ENCODE measurements at regions of chr15 and their contacts with region 1.

Region 1: DNA sequence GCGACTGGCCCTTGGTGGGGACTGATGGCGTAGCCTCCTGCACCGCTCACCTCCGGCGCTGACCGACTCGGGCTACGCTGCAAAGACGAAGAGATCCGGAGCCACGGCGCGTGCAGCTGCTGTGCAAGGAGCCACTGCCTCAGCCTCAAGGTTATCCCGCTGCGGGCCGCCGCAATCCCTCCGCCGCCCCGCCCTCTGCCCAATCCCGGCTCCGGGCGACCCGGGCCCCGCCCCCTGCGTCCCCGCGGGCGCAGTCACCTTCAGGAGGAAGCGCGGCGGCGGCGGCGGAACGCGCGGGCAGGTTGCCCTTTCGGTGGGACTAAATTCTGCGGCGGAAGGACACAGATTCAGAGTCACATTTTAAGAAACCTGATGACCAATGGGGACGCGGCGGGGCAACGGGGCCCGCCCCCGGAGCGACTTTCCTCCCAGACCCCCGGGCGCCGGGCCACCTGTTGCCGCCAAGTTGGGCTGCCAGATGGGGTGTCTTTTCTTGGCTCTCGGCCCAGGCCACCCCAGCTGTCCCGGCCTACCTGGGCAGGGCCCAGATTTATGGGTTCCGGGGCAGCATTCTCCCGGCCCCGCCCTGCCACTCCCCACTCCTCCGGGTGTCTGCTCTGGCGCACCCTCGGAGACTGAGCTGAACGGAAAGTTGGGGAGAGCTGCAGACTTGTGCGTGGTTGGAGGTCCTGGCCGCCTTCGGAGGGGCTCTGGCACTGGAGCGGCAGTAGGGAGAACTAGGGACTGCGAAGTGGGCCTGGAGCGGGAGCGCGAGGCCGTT is at the start of gene PKM:
- DNase-seq: peak; percentile 88
- H3K4me3 ChIP-seq: peak within 1 kb of the TSS; percentile 56 to 78 (median 70)
- H3K27ac ChIP-seq: peak within 1 kb of the TSS; percentile 84
- H3K4me1 ChIP-seq: peaks cover 40% of the 10 kb centered on the region
- H3K27me3 ChIP-seq: no peaks in the 10 kb centered on the region
- CTCF ChIP-seq: no peak
- POLR2A ChIP-seq: peak; percentile 99
- total RNA-seq, gene PKM: 932 and 968 TPM in 2 replicates

Region 2: GRCh38 chr15:71899674-71900073 is 331.6 kb before region 1 on chr15:
- CTCF ChIA-PET with region 1: no interaction called
- POLR2A ChIA-PET with region 1: no interaction called
- dilution Hi-C with region 1: no loop called
- intact Hi-C with region 1: no loop called
- DNase-seq: no peak
- H3K4me3 ChIP-seq: no peak overlapping the region
- H3K27ac ChIP-seq: no peak overlapping the region
- H3K4me1 ChIP-seq: no peaks in the 10 kb centered on the region
- H3K27me3 ChIP-seq: no peaks in the 10 kb centered on the region
- CTCF ChIP-seq: no peak
- POLR2A ChIP-seq: no peak

Region 3: DNA sequence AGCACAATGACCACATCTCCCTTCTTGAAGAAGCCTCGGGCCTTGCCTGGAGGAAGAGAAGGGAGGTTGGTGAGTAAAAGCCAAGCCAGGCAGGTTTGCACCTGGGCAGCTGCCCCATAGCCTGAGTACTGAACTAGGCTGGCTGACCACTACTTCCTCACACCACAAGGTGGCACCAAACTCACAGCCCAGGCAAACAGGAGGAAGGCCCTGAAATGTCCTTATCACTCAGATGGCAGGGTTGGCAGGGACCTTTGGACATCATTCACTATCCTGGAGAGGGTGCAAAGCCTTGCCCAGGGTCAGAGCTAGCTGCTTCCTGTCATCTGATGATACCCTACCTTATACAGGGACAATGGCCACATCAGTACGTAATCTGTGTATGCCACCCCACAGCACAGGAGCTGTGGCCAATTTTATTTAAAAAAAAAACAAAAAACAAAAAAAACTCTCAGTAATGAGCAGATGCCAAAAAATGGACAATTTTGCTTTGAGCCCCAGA is 31.5 kb before region 1 on chr15:
- CTCF ChIA-PET with region 1: interaction called, 47 read pairs
- POLR2A ChIA-PET with region 1: no interaction called
- dilution Hi-C with region 1: no loop called
- intact Hi-C with region 1: loop called (anchors 1 kb)
- DNase-seq: peak; percentile 73
- H3K4me3 ChIP-seq: no peak overlapping the region
- H3K27ac ChIP-seq: no peak overlapping the region
- H3K4me1 ChIP-seq: peaks cover 8% of the 10 kb centered on the region
- H3K27me3 ChIP-seq: peaks cover 0 to 2% of the 10 kb centered on the region in 2 experiments
- CTCF ChIP-seq: peak; percentile 86 to 92
- POLR2A ChIP-seq: no peak

Region 4: DNA sequence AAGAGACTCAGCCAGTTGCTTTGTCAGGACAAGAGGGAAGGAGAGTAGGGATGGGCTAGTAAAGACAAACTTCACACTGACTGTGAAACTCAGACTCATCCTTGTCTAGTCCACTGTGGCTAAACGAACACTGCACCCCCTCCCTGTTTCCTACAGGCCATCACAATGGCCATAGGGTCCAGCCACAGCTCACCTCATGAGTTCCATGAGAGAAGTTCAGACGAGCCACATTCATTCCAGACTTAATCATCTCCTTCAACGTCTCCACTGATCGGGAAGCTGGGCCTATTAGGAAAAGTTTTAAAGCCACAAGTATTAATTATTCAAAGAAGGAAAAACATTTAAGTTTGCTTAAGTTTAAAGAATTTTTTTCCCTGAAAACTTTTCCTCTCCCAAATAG is 14.0 kb before region 1 on chr15:
- CTCF ChIA-PET with region 1: interaction called, 14 read pairs
- POLR2A ChIA-PET with region 1: interaction called, 4 read pairs
- dilution Hi-C with region 1: no loop called
- intact Hi-C with region 1: no loop called
- DNase-seq: no peak
- H3K4me3 ChIP-seq: no peak overlapping the region
- H3K27ac ChIP-seq: no peak overlapping the region
- H3K4me1 ChIP-seq: no peaks in the 10 kb centered on the region
- H3K27me3 ChIP-seq: no peaks in the 10 kb centered on the region
- CTCF ChIP-seq: no peak
- POLR2A ChIP-seq: no peak

Region 5: GRCh38 chr15:72272213-72273002 is 41.2 kb after region 1 on chr15 and contains the start of gene PARP6:
- CTCF ChIA-PET with region 1: interaction called, 6 read pairs
- POLR2A ChIA-PET with region 1: interaction called, 5 read pairs
- dilution Hi-C with region 1: no loop called
- intact Hi-C with region 1: loop called (anchors 1 kb)
- DNase-seq: peak; percentile 99
- H3K4me3 ChIP-seq: peak within 1 kb of the TSS; percentile 45 to 97 (median 66)
- H3K27ac ChIP-seq: peak within 1 kb of the TSS; percentile 57
- H3K4me1 ChIP-seq: peaks cover 12% of the 10 kb centered on the region
- H3K27me3 ChIP-seq: no peaks in the 10 kb centered on the region
- CTCF ChIP-seq: peak; percentile 31 to 74
- POLR2A ChIP-seq: peak; percentile 58
- total RNA-seq, gene PARP6: 37.4 and 41.1 TPM in 2 replicates

Region 6: GRCh38 chr15:72285927-72286516 is 54.8 kb after region 1 on chr15:
- CTCF ChIA-PET with region 1: interaction called, 3 read pairs
- POLR2A ChIA-PET with region 1: no interaction called
- dilution Hi-C with region 1: no loop called
- intact Hi-C with region 1: loop called (anchors 1 kb)
- DNase-seq: peak; percentile 40
- H3K4me3 ChIP-seq: no peak overlapping the region
- H3K27ac ChIP-seq: no peak overlapping the region
- H3K4me1 ChIP-seq: no peaks in the 10 kb centered on the region
- H3K27me3 ChIP-seq: peaks cover 1% of the 10 kb centered on the region in 2 experiments
- CTCF ChIP-seq: peak; percentile 65 to 77
- POLR2A ChIP-seq: no peak

Region 7: GRCh38 chr15:72473614-72474465 is 242.6 kb after region 1 on chr15 and contains the start of gene ARIH1:
- CTCF ChIA-PET with region 1: interaction called, 4 read pairs
- POLR2A ChIA-PET with region 1: no interaction called
- dilution Hi-C with region 1: no loop called
- intact Hi-C with region 1: loop called (anchors 2 kb)
- DNase-seq: peak; percentile 96
- H3K4me3 ChIP-seq: peak within 1 kb of the TSS; percentile 94 to 99 (median 99)
- H3K27ac ChIP-seq: peak within 1 kb of the TSS; percentile 97
- H3K4me1 ChIP-seq: peaks cover 27% of the 10 kb centered on the region
- H3K27me3 ChIP-seq: no peaks in the 10 kb centered on the region
- CTCF ChIP-seq: peak; percentile 21 to 23
- POLR2A ChIP-seq: peak; percentile 90
- total RNA-seq, gene ARIH1: 137 and 144 TPM in 2 replicates